ENCODE measurements at regions of chr6 and their contacts with region 1.

Region 1: GRCh38 chr6:36302227-36302976 is 32.5 kb downstream of the PNPLA1 start:
- DNase-seq: peak; percentile 89
- CTCF ChIP-seq: peak; percentile 87

Region 2: DNA sequence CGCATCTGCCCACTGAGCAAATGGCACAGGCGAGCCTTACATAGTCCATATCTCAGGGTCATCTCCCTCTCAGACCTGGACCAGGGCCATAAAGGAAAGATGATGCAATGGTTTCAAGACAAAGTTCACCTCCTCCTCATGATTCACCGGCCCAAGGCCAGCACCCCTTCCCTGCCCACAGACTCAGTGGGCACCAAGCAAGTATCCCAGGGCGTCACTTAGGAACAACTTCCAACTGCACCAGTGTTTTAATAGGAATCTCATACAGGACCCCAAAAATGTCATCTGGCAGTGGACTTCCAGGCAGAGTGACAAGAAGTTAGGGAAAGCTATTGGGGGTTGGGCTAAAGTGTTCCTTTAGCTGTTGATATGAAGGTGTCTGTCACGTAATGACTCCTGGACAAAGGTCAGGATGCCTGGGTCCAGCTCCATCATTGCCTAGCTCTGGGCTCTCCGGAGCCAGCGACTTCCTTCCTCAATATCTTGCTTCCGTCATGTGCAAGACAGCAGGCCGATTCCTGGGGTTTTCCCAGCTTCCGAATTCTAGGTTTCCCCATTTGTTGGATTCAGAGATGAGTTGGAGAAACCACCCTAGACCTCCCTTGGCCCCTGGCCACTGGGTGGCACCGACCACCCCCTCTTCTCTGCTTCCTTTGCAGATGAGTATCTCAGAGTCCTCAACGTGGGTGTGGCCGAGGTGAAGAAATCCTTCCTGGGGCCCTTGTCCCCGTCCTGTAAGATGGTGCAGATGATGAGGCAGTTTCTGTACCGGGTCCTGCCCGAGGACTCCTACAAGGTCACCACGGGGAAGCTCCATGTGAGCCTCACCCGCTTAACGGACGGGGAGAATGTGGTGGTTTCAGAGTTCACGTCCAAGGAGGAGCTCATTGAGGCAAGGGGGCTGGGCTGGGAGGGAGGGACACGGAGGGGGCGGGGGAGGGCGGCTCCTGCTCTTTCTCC is 11.5 kb before region 1 on chr6:
- CTCF ChIA-PET with region 1: interaction called, 50 read pairs
- POLR2A ChIA-PET with region 1: no interaction called
- DNase-seq: no peak
- CTCF ChIP-seq: no peak

Region 3: GRCh38 chr6:36326356-36326995 is 24.1 kb after region 1 on chr6:
- CTCF ChIA-PET with region 1: interaction called, 10 read pairs
- POLR2A ChIA-PET with region 1: no interaction called
- DNase-seq: no peak
- CTCF ChIP-seq: no peak

Region 4: GRCh38 chr6:36340618-36341454 is 38.4 kb after region 1 on chr6:
- CTCF ChIA-PET with region 1: interaction called, 14 read pairs
- POLR2A ChIA-PET with region 1: no interaction called
- DNase-seq: peak; percentile 83
- CTCF ChIP-seq: peak; percentile 96

Region 5: GRCh38 chr6:36350681-36351571 is 48.5 kb after region 1 on chr6:
- CTCF ChIA-PET with region 1: interaction called, 227 read pairs
- POLR2A ChIA-PET with region 1: no interaction called
- DNase-seq: no peak
- CTCF ChIP-seq: no peak

Region 6: DNA sequence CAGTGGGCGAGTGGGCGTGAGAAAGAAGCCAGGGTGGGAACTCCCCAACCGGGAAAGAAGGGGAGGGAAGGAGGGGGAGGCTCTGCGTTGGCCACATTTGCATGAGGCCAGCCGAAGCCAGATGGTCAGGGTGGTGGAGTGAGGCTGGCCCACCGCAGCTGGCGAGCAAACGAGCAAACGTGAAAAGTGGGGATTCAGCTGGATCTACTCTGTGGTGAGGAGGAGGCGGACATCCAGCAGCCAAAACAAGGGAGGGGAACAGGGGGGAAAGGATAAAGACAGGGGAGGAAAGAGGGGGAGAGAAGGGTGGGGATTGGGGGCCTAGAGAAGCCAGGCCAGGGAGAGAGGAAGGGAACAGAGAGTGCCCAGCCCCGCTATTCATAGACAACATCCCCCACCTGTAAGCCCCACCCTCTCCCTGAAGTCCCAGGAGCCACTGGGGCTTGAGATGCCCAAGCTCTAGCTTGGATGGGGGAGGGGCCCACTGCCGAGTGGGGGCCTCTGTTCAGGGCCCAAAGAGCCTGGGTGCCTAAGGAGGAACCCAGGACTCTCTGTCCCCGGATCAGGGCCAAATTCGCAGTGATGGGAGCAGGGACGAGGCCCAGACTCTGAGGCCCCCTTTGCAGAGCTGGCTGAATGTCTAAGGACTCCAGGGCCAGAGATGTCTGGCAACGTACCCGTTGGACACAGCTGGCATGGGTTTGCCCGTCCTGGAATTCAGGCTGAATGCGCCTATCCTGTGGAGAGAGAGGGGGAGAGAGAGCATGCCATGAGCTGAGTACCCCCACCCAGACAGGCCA is 491.7 kb after region 1 on chr6:
- CTCF ChIA-PET with region 1: no interaction called
- POLR2A ChIA-PET with region 1: no interaction called
- DNase-seq: no peak
- CTCF ChIP-seq: no peak